Endothelial cell of umbilical vein (primary cell): ENCODE measurements at regions of chr1 and their contacts with region 1.

Region 1: GRCh38 chr1:89843281-89844121 is 22.7 kb downstream of the LRRC8D start:
- DNase-seq: peak; percentile 75
- H3K4me3 ChIP-seq: peak overlapping the region; percentile 68 to 97 (median 91)
- H3K27ac ChIP-seq: peak overlapping the region; percentile 67
- H3K4me1 ChIP-seq: peaks cover 20% of the 10 kb centered on the region
- H3K27me3 ChIP-seq: no peaks in the 10 kb centered on the region
- CTCF ChIP-seq: peak; percentile 65 to 69
- POLR2A ChIP-seq: peak; percentile 57

Region 2: DNA sequence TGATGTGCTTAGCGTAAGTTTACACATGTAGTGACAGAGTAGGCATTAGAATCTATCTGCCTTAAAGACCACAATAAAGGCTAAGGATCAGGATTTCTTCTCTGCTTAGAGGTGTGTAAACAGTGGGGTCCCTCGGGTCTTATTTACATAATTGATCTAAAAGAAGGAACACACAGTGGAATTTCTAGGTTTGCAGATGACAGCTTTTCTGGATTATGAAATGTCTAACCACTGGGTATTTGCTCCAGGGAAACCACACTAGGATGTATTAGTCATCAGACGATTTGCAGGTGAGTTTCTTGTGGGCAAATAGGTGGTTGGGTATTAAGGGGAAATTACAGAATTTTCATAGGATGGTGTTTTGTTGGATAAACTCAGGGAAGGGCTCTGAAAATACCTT is 16.9 kb before region 1 on chr1:
- CTCF ChIA-PET with region 1: interaction called, 11 read pairs
- POLR2A ChIA-PET with region 1: no interaction called
- dilution Hi-C with region 1: no loop called
- intact Hi-C with region 1: no loop called
- DNase-seq: no peak
- H3K4me3 ChIP-seq: no peak overlapping the region
- H3K27ac ChIP-seq: no peak overlapping the region
- H3K4me1 ChIP-seq: peaks cover 6% of the 10 kb centered on the region
- H3K27me3 ChIP-seq: peaks cover 0 to 1% of the 10 kb centered on the region in 2 experiments
- CTCF ChIP-seq: no peak
- POLR2A ChIP-seq: no peak

Region 3: GRCh38 chr1:89884718-89885596 is 41.5 kb after region 1 on chr1:
- CTCF ChIA-PET with region 1: interaction called, 5 read pairs
- POLR2A ChIA-PET with region 1: no interaction called
- dilution Hi-C with region 1: no loop called
- intact Hi-C with region 1: loop called (anchors 1 kb)
- DNase-seq: peak; percentile 87
- H3K4me3 ChIP-seq: peak overlapping the region in 1 of 3 experiments; percentile 23
- H3K27ac ChIP-seq: peak overlapping the region; percentile 80
- H3K4me1 ChIP-seq: peaks cover 48% of the 10 kb centered on the region
- H3K27me3 ChIP-seq: no peaks in the 10 kb centered on the region
- CTCF ChIP-seq: no peak
- POLR2A ChIP-seq: no peak

Region 4: DNA sequence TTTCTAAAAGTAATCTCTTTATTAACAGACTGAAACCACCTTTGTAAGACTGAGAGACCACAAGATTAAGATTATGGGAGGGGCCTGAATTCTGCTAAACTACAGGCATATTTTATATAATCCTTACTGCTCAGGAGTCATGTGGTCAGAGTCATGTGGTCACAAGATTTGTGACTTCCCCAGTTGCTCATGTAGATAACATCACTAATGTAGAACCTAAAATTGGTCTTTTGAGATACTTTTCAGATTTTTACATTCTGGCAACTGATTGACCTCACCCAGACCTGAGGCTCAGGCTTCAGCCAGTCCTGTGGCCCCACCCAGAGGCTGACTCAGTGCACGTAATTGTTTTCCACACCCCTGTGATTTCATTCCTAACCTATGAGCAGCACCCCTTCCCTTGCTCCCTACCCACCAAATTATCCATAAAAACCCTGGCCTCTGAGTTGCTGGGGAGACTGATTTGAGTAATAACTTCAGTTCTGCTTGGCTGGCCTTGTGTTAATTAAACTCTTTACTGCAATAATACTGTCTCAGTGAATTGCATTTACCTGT is 109.6 kb after region 1 on chr1:
- CTCF ChIA-PET with region 1: interaction called, 5 read pairs
- POLR2A ChIA-PET with region 1: no interaction called
- dilution Hi-C with region 1: no loop called
- intact Hi-C with region 1: loop called (anchors 1 kb)
- DNase-seq: peak; percentile 42
- H3K4me3 ChIP-seq: no peak overlapping the region
- H3K27ac ChIP-seq: no peak overlapping the region
- H3K4me1 ChIP-seq: peaks cover 5% of the 10 kb centered on the region
- H3K27me3 ChIP-seq: no peaks in the 10 kb centered on the region
- CTCF ChIP-seq: peak; percentile 24 to 29
- POLR2A ChIP-seq: no peak

Region 5: GRCh38 chr1:89987170-89987819 is 143.8 kb after region 1 on chr1:
- CTCF ChIA-PET with region 1: interaction called, 29 read pairs
- POLR2A ChIA-PET with region 1: no interaction called
- dilution Hi-C with region 1: no loop called
- intact Hi-C with region 1: loop called (anchors 1 kb)
- DNase-seq: peak; percentile 82
- H3K4me3 ChIP-seq: no peak overlapping the region
- H3K27ac ChIP-seq: no peak overlapping the region
- H3K4me1 ChIP-seq: no peaks in the 10 kb centered on the region
- H3K27me3 ChIP-seq: peaks cover 0 to 2% of the 10 kb centered on the region in 2 experiments
- CTCF ChIP-seq: peak; percentile 66 to 68
- POLR2A ChIP-seq: no peak